ENCODE measurements at regions of chrX and their contacts with region 1.

Region 1: GRCh38 chrX:36867143-36867542 is 141.0 kb upstream of the FAM47C start:
- DNase-seq: no peak
- ATAC-seq: no peak
- H3K4me3 Mint-ChIP-seq: no peak overlapping the region
- H3K27ac Mint-ChIP-seq: no peak overlapping the region
- H3K4me1 Mint-ChIP-seq: no peaks in the 10 kb centered on the region
- H3K27me3 Mint-ChIP-seq: peaks cover 2% of the 10 kb centered on the region

Region 2: GRCh38 chrX:35890699-35891098 is 976.4 kb before region 1 on chrX:
- CTCF ChIA-PET with region 1: no interaction called
- POLR2A ChIA-PET with region 1: no interaction called
- intact Hi-C with region 1: loop called in 1 of 2 experiments (anchors 1 kb)
- DNase-seq: peak; percentile 34
- ATAC-seq: no peak
- H3K4me3 Mint-ChIP-seq: no peak overlapping the region
- H3K27ac Mint-ChIP-seq: no peak overlapping the region
- H3K4me1 Mint-ChIP-seq: no peaks in the 10 kb centered on the region
- H3K27me3 Mint-ChIP-seq: no peaks in the 10 kb centered on the region

Measured in activated CD4-positive, alpha-beta T cell treated with anti-CD3 and anti-CD28 coated beads for 36 hours (primary cell).